Right ventricle myocardium superior (tissue), 1 donor: ENCODE measurements at regions of chr12 and their contacts with region 1.

Region 1: DNA sequence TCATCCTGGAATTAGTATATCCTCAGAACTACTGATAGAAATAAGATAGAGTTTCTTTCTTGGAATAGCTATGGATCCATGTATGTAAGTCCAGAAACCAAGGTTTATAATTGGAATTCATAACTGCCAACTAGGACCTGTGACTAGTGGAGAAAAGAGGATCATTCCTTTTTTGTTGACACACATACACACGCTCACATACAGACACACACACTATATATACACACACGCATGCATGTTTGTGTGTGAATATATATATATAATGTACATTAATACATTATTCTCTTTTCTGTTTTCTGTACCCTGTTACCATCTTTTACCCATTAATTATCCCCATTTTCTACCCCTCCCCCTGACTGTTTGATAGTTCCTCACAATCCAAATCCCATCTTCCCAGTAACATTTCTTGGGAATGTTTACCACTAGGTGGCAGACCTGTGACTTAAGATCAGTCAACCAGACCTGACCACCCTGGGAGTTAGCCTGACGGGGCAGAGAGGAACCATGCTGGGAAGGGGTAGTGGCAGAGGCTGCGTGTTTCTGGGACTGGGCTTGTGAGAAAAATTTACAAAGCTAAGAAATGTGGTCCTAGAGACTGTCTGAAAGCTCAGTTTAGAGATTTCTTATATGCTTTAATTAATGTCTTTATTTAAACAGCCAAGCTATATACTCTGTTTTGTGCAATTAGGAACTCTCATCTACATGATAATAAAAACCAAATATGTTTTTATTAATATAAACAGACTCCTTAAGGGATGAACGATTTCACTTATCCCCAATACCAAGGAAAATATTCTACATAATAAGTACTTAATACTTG is 308.0 kb downstream of the PPFIA2 start:
- DNase-seq: no peak
- ATAC-seq: peak; percentile 80

Region 2: DNA sequence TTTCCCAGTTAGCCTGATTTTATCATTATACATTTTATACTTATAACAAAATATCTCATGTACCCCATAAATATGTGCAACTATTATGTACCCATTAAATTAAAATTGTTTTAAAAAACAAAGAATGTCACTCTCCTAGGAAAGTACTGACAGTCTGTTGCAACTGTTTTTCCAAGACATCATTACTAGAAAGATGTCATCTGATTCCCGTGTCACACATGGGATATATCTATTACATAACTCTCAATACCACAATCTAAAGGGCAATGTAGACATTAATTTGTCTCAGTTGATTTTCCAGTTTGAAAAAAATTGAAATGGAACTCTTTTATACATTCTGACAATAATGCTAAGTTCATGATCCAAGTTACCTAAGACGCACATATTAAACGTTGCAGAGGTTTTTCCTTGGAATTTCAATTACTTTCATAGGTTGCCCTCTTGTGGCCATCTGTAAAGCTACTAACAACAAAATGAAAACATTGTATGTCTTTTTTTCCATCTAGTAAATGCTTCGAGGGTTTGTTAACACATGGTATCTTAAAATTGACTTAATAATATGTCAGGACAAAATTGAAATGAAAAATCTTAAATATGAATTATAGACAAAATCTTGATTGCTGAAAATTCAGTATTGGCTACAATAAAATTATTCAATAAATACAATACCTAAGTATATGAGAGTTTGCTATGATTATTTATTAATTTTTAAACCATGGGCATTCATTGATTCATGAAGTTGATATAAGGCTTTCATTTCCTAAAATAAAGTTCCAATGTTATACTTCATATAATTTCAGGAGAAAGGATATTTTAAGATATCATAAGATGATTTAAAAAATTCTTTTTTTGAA is 176.4 kb after region 1 on chr12:
- intact Hi-C with region 1: loop called (anchors 5 kb)
- DNase-seq: no peak
- ATAC-seq: peak; percentile 41